HEK293 (cell line): ENCODE measurements at regions of chr11 and their contacts with region 1.

Region 1: GRCh38 chr11:64040684-64041322 is 5.1 kb downstream of the FLRT1 start:
- H3K4me3 ChIP-seq: no peak overlapping the region
- H3K27ac ChIP-seq: no peak overlapping the region
- H3K4me1 ChIP-seq: no peaks in the 10 kb centered on the region
- CTCF ChIP-seq: no peak

Region 2: DNA sequence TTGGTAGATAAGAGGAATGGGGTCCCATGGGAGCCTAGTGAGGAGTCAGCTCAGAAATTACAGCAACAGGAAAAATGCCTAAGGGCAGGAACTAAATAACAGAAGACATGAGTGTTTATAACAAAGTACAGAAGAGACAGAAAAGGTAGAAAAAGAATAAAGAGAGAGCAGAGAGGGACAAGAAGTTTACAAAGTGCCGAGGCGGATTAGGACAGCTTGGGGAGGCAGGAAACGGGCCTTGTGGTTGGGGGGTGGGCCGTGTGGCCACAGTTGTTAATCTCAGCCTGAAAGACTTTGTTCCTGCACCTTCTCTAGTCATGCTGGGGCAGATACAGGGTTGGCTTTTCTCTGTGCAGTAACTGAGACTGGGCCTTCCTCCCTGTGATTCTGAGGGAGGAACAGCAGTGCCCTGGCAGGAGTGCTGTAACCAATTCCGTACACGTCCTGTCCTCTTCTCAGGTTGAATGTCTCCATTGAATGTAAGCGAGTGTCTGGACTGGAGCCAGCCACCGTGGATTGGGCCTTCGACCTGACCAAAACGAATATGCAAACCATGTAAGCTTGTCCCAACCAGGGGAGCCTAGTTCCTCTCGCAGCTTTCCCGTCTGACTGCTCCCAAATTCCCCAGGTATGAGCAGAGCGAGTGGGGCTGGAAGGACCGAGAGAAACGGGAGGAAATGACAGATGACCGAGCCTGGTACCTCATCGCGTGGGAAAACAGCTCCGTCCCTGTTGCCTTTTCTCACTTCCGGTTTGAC is 88.8 kb before region 1 on chr11:
- CTCF ChIA-PET with region 1: no interaction called
- POLR2A ChIA-PET with region 1: no interaction called
- H3K4me3 ChIP-seq: no peak overlapping the region
- H3K27ac ChIP-seq: no peak overlapping the region
- H3K4me1 ChIP-seq: no peaks in the 10 kb centered on the region
- CTCF ChIP-seq: no peak

Region 3: DNA sequence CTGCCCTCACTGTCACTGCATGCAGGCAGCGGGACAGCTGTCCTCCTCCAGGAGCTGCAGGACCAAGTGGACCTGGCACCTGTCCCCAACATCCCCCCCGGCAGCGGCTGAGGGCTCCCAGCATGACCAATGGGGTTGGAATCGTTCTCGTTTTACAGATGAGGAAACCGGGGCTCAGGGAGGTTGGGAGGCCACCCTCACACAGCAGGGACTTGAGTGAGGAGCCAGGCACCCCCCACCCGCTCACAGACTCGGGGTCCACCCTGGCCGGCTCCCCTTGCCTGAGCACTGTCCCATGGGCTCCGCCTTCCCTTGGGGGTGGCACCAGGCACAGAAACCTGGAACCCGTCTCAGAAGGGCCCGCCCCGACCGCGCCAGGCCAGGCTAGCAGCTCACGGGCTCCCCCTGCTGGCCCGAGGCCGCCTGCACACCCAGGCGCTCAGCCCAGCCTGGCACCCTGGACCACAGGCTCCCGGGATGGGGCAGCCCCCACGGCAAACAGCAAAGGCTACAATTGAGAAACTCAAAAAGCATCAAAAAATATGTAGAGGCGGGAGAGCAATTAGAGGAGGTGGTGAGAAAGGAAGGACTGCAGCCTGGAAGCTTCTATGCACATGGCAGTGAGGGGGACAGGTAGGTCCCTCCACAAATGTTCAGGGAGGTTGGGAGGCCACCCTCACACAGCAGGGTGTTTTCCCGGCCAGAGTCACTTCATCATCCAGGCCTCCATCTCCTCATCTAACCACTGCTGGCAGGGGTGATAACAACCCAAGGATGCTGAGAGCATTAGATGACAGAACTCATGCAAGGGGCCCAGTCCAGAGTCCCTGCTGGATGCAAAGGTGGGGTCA is 112.3 kb after region 1 on chr11:
- CTCF ChIA-PET with region 1: interaction called, 10 read pairs
- POLR2A ChIA-PET with region 1: no interaction called
- H3K4me3 ChIP-seq: no peak overlapping the region
- H3K27ac ChIP-seq: no peak overlapping the region
- H3K4me1 ChIP-seq: no peaks in the 10 kb centered on the region
- CTCF ChIP-seq: peak; percentile 83